ENCODE measurements at regions of chr7 and their contacts with region 1.

Region 1: DNA sequence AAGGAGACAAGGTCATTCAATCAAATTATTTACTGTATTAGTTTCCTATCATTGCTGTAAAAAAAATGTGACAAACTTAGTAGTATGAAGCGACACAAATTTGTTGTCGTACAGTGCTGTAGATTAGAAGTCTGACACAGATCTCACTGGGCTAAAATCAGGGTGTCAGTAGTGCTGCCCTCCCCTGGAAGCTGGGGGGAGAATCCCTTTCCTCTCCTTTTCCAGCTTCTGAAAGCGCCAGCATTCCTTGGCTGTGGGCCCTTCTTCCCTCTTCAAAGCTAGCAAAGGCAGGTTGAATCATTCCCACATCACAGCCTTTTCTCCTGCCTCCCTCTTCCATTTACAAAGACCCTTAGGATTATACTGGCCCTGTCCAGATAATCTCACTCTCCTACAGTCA is 28.0 kb downstream of the VPS41 start:
- DNase-seq: no peak
- H3K4me3 Mint-ChIP-seq: no peak overlapping the region
- H3K27ac Mint-ChIP-seq: no peak overlapping the region
- H3K4me1 Mint-ChIP-seq: peaks cover 49% of the 10 kb centered on the region
- H3K27me3 Mint-ChIP-seq: no peaks in the 10 kb centered on the region

Region 2: GRCh38 chr7:38656968-38657367 is 224.0 kb before region 1 on chr7:
- CTCF ChIA-PET with region 1: no interaction called
- POLR2A ChIA-PET with region 1: no interaction called
- intact Hi-C with region 1: no loop called
- DNase-seq: no peak
- H3K4me3 Mint-ChIP-seq: no peak overlapping the region
- H3K27ac Mint-ChIP-seq: no peak overlapping the region
- H3K4me1 Mint-ChIP-seq: no peaks in the 10 kb centered on the region
- H3K27me3 Mint-ChIP-seq: peaks cover 11% of the 10 kb centered on the region

Region 3: DNA sequence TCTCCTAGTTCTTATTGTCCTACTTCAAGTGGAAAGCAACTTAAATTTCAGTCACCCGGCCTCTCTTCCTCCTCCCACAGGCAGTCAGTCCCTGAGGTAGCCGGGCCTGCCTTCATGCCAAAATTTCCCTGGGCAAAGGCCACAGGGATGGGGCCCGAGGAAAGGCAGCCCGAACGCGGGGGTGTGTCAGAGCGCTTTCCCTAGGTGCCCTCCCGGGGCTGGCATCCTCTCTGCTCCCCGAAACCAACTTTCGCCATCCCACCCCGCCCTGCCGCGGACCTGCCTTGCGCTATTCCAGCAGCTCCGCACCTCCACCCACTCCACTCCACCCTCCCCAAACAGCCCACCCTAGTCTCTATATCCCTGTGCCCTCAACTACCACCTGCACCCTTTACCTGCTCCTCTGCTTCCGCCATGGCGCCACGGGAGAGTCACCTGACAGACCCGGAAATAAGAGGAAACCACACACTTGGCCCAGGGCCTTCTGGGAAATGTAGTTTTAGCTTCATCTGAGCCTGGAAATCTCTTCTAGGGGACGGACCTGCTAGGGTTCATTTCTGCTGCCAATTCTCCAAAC is 27.8 kb after region 1 on chr7 and contains the start of gene VPS41:
- CTCF ChIA-PET with region 1: no interaction called
- POLR2A ChIA-PET with region 1: no interaction called
- intact Hi-C with region 1: loop called (anchors 2 kb)
- DNase-seq: peak; percentile 86
- H3K4me3 Mint-ChIP-seq: peak within 1 kb of the TSS; percentile 91
- H3K27ac Mint-ChIP-seq: peak within 1 kb of the TSS; percentile 68
- H3K4me1 Mint-ChIP-seq: peaks cover 37% of the 10 kb centered on the region
- H3K27me3 Mint-ChIP-seq: no peaks in the 10 kb centered on the region
- total RNA-seq, gene VPS41: 62.9 to 66.8 TPM

Measured in activated CD4-positive, alpha-beta memory T cell treated with anti-CD3 and anti-CD28 coated beads for 36 hours (primary cell).